SK-N-SH (cell line): ENCODE measurements at regions of chr3 and their contacts with region 1.

Region 1: DNA sequence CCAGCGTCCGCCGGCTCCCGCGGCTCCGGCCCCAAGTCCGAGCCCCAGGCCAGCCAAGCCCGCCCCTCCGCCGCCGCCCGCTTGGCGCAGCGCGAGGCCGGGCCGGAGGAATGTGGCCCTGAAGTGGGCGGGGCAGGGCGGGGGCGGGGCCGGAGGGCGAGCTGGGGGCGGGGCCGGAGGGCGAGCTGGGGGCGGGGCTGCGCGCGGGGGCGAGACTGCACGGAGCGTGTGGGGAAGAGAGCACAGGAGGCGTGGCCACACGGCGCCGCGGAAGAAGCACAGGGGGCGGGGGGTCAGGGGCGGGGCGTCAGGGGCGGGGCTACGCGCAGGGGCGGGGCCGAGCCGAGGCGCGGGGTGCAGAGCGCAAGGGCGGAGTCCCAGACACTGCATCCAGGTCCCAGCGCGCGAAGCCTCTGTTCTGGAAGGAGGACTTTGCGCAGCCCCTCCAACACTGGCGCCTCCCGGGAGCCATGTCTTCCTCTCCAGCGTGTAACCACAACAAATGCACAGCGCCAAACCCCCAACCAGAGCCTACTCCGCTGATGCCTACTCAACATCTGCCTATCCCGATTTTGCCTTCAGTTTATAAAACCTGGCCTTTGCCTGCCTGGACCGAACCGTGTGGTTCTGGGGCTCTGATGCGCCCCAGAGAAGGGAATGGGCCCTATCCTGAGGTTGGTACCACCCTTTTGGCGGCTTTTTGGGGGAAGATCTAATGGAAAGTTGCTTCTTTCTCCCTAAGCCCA is 105.5 kb downstream of the IQSEC1 start:
- DNase-seq: peak; percentile 100
- H3K4me3 ChIP-seq: peak overlapping the region; percentile 65 to 82
- H3K27ac ChIP-seq: peak overlapping the region in 1 of 2 experiments; percentile 21; a peak in 2 of 4 replicates
- H3K4me1 ChIP-seq: peaks cover 0 to 56% of the 10 kb centered on the region in 2 experiments; a peak in 2 of 4 replicates
- H3K27me3 ChIP-seq: no peaks in the 10 kb centered on the region
- CTCF ChIP-seq: no peak
- EP300 ChIP-seq: no peak
- RAD21 ChIP-seq: no peak

Region 2: GRCh38 chr3:12954891-12955650 is 12.7 kb before region 1 on chr3:
- CTCF ChIA-PET with region 1: interaction called, 13 read pairs
- POLR2A ChIA-PET with region 1: no interaction called
- DNase-seq: peak; percentile 88
- H3K4me3 ChIP-seq: no peak overlapping the region; a peak in 1 of 4 replicates
- H3K27ac ChIP-seq: peak overlapping the region; percentile 24 to 77; a peak in 3 of 4 replicates
- H3K4me1 ChIP-seq: peaks cover 15 to 52% of the 10 kb centered on the region in 2 experiments; a peak in 2 of 4 replicates
- H3K27me3 ChIP-seq: no peaks in the 10 kb centered on the region
- CTCF ChIP-seq: no peak
- EP300 ChIP-seq: peak in 1 of 2 experiments; percentile 50; a peak in 1 of 4 replicates
- RAD21 ChIP-seq: peak; percentile 59

Region 3: GRCh38 chr3:12984023-12984823 is 16.4 kb after region 1 on chr3:
- CTCF ChIA-PET with region 1: interaction called, 26 read pairs
- POLR2A ChIA-PET with region 1: no interaction called
- DNase-seq: peak; percentile 80
- H3K4me3 ChIP-seq: peak overlapping the region in 1 of 2 experiments; percentile 7; a peak in 1 of 4 replicates
- H3K27ac ChIP-seq: no peak overlapping the region; a peak in 1 of 4 replicates
- H3K4me1 ChIP-seq: peaks cover 0 to 27% of the 10 kb centered on the region in 2 experiments; a peak in 1 of 4 replicates
- H3K27me3 ChIP-seq: no peaks in the 10 kb centered on the region
- CTCF ChIP-seq: peak; percentile 77
- EP300 ChIP-seq: no peak
- RAD21 ChIP-seq: peak; percentile 84